Activated CD4-positive, alpha-beta T cell treated with anti-CD3 and anti-CD28 coated beads, Interleukin-2, amount 10 ng/mL, durations not matched to agents 24 days and 14 days (primary cell): ENCODE measurements at regions of chr5 and their contacts with region 1.

Region 1: DNA sequence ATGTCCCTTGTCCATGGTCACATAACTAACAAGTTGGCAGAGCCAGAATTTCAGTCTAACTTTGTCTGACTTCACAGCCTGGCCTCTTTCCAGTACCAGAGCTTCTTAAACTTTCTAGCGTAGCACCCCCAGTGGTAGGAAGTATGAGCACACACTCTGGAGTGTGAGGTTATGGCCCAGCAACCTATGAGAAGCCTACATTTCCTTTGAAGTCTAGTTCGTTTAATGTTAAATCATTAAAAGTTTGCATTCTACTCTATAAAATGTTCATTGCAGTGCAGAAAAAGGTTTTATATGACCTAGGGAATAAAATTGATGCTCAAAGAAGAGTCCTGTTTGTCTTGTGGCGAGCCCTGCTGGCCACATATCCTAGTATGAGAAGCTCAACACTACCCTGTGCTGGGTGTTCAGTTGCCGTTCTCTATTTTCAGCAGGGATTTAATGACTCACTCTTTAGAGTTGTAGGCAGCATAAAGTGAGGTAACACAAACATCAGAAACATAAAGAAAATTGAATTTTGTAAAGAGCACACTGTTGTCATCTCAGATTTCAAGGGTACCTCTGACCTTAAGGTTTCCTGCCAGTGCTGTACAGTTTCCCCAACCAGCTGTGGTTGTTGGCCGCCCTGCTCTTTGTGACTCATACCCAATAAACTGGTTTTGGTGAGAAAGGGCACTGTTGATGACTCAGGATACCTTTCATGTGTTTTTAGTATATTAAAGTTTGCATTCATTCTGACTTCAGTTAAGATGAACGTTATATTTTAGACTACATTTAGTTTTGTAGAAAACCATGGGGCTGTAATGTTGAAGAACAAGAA is 14.3 kb downstream of the MCCC2 start:
- DNase-seq: peak; percentile 89
- H3K4me3 Mint-ChIP-seq: peak overlapping the region; percentile 36
- H3K27ac Mint-ChIP-seq: peak overlapping the region; percentile 93
- H3K4me1 Mint-ChIP-seq: peaks cover 32% of the 10 kb centered on the region
- H3K27me3 Mint-ChIP-seq: no peaks in the 10 kb centered on the region

Region 2: GRCh38 chr5:71455427-71456361 is 145.7 kb before region 1 on chr5 and contains the start of gene BDP1:
- intact Hi-C with region 1: loop called (anchors 1 kb)
- DNase-seq: peak; percentile 99
- H3K4me3 Mint-ChIP-seq: peak within 1 kb of the TSS; percentile 97
- H3K27ac Mint-ChIP-seq: peak within 1 kb of the TSS; percentile 99
- H3K4me1 Mint-ChIP-seq: peaks cover 23% of the 10 kb centered on the region
- H3K27me3 Mint-ChIP-seq: peaks cover 2% of the 10 kb centered on the region
- total RNA-seq, gene BDP1: 39.1 and 39.4 TPM in 2 replicates

Region 3: DNA sequence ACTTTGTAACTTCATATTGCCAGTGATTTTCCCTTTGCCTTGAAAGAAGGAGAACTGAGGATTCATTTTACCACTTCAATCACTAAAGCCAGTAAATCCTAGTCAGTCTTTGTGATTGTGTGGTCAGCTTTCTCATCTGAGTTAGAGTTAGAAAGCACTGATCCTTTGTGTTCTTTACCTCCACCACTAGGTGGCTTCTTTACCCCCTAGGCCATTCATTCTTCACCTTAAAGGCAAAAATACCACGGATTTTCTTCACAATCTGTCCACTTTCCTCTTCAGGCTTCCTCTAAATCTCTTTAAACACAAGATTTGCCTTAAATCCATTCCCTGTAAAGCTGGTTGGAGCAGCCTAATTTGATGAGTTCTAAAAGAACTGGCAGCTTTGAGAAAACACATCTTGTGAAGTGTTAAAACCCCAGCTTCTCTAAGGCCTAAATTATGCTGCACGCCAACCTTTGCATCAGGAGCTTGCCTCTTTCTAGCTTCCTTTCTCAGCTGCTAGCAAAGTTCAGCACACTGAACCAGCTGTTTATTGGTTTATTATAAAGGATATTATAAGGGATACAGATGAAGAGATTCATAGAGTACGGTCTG is 125.5 kb before region 1 on chr5:
- intact Hi-C with region 1: loop called (anchors 5 kb)
- DNase-seq: no peak
- H3K4me3 Mint-ChIP-seq: no peak overlapping the region
- H3K27ac Mint-ChIP-seq: no peak overlapping the region
- H3K4me1 Mint-ChIP-seq: no peaks in the 10 kb centered on the region
- H3K27me3 Mint-ChIP-seq: no peaks in the 10 kb centered on the region

Region 4: DNA sequence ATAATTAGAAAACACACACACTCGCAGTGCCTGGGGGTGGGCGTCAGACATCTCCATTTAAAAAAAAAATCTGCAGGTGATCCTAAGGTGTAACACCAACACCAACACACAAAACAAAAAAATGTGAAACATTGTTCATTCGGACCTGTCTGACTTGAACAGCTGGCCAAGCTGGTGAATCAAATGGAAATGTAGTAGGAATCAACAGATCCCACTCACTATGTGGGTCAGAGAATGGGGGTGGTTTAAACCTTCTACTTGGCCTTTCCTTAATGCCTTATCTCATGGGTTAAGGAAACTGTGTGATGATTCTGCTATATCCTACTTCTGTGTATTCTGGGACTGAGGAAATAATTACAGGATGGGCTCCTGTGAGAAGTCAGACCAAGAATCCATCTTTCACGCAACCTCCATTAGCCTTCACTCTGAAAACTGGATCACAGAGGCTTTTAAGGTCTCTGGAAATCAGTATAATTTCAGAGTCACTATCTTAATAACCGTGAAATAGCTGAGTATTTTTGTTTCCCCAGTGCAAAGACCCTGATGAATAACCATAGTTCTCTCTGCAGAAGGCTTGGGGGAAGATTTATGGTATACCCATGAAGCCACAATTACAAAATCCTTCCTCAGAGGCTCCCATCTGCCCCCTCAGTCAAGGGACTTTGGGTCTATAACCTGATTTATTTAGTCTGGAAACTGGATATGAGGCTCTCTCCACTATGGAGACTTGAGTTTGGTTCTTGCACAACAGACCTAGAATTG is 31.5 kb before region 1 on chr5:
- intact Hi-C with region 1: loop called (anchors 5 kb)
- DNase-seq: no peak
- H3K4me3 Mint-ChIP-seq: no peak overlapping the region
- H3K27ac Mint-ChIP-seq: no peak overlapping the region
- H3K4me1 Mint-ChIP-seq: no peaks in the 10 kb centered on the region
- H3K27me3 Mint-ChIP-seq: no peaks in the 10 kb centered on the region

Region 5: DNA sequence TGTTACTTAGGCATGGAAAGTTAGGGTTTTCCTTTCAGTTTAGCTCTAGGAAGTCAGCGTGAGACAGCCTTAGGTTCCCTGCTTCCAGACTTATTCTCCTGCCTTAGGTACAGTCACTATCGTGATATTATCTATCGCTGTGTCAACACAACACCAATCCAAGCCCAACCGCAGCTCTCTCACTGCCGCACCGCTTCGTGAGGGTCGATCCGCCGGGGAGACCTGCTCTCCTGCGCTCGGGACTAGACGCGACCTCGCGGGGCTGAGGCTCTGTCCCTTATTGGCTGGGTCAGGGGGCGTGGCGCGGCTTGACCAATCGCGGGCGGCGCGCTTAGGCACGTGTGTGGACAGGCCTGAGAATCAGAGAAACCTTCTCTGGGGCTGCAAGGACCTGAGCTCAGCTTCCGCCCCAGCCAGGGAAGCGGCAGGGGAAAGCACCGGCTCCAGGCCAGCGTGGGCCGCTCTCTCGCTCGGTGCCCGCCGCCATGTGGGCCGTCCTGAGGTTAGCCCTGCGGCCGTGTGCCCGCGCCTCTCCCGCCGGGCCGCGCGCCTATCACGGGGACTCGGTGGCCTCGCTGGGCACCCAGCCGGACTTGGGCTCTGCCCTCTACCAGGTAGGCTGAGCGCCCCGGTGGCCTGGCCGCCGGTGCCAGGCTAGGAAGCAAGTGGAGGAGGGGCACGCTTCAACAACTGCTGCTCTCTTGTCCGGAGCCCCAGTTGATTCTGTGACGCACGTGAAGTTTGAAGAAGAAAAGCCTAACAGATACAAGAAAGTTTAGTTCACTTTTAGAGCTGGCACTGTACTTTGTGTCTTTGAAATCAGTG is 14.3 kb before region 1 on chr5 and contains the start of gene MCCC2:
- intact Hi-C with region 1: loop called (anchors 1 kb)
- DNase-seq: peak; percentile 99
- H3K4me3 Mint-ChIP-seq: peak within 1 kb of the TSS; percentile 89
- H3K27ac Mint-ChIP-seq: peak within 1 kb of the TSS; percentile 99
- H3K4me1 Mint-ChIP-seq: peaks cover 31% of the 10 kb centered on the region
- H3K27me3 Mint-ChIP-seq: no peaks in the 10 kb centered on the region
- total RNA-seq, gene MCCC2: 58.7 and 58.9 TPM in 2 replicates

Region 6: GRCh38 chr5:71652803-71653543 is 51.5 kb after region 1 on chr5:
- intact Hi-C with region 1: loop called (anchors 5 kb)
- DNase-seq: no peak
- H3K4me3 Mint-ChIP-seq: no peak overlapping the region
- H3K27ac Mint-ChIP-seq: peak overlapping the region; percentile 36
- H3K4me1 Mint-ChIP-seq: peaks cover 17% of the 10 kb centered on the region
- H3K27me3 Mint-ChIP-seq: no peaks in the 10 kb centered on the region

Region 7: GRCh38 chr5:71782771-71783770 is 181.6 kb after region 1 on chr5:
- intact Hi-C with region 1: loop called (anchors 2 kb)
- DNase-seq: peak; percentile 75
- H3K4me3 Mint-ChIP-seq: peak overlapping the region; percentile 32
- H3K27ac Mint-ChIP-seq: no peak overlapping the region
- H3K4me1 Mint-ChIP-seq: peaks cover 15% of the 10 kb centered on the region
- H3K27me3 Mint-ChIP-seq: peaks cover 11% of the 10 kb centered on the region